ENCODE measurements at regions of chr20 and their contacts with region 1.

Region 1: DNA sequence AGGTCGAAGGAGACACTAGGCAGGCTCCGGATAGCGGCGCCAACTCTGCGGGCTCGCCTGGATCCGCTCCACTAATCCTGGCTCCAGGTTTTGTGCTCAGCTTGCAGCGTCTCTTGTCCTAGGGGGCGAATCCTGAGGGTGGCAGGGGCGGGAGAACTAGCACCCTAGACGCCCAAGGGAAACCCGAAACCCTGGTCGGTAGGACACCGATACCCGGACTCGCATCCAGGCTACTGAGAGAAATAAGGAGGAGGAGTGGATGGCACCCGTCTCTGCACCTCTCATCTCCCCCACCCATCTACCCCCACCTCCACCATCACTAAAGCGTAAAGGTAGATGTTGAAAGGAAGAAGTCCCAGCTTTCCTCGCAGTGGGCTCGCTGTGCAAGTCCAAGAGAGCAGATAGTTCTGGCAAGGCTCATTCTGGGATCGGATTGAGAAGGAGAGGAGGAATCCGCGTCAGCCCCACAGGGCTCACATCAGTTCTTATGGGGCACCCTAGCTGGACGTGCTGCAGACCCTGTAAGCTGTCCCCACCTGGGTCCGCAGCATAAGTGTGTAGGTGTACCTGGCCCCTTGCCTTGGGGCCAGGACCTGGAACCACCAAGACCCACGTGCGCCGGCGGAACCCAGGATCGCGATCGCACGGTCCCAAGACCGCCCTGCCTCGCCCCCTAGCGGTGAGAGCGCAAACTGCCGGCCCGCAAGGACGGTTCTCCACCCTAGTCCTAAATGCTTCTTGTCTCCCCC is 6.9 kb downstream of the SLC32A1 start:
- DNase-seq: peak; percentile 60 to 86 (median 76)
- ATAC-seq: peak; percentile 75
- H3K4me3 ChIP-seq: peak overlapping the region; percentile 46 to 65
- H3K4me3 Mint-ChIP-seq: peak overlapping the region; percentile 73
- H3K27ac ChIP-seq: no peak overlapping the region
- H3K27ac Mint-ChIP-seq: no peak overlapping the region
- H3K4me1 ChIP-seq: peaks cover 34% of the 10 kb centered on the region
- H3K4me1 Mint-ChIP-seq: peaks cover 48% of the 10 kb centered on the region
- H3K27me3 ChIP-seq: peaks cover 60 to 79% of the 10 kb centered on the region in 2 experiments
- H3K27me3 Mint-ChIP-seq: peaks cover 90% of the 10 kb centered on the region
- CTCF ChIP-seq: peak; percentile 97

Region 2: GRCh38 chr20:38221119-38221589 is 510.0 kb before region 1 on chr20:
- CTCF ChIA-PET with region 1: no interaction called
- POLR2A ChIA-PET with region 1: no interaction called
- intact Hi-C with region 1: no loop called
- DNase-seq: peak; percentile 44 to 79 (median 66)
- ATAC-seq: peak; percentile 58
- H3K4me3 ChIP-seq: no peak overlapping the region
- H3K4me3 Mint-ChIP-seq: no peak overlapping the region
- H3K27ac ChIP-seq: no peak overlapping the region
- H3K27ac Mint-ChIP-seq: no peak overlapping the region
- H3K4me1 ChIP-seq: no peaks in the 10 kb centered on the region
- H3K4me1 Mint-ChIP-seq: peaks cover 2% of the 10 kb centered on the region
- H3K27me3 ChIP-seq: no peaks in the 10 kb centered on the region
- H3K27me3 Mint-ChIP-seq: peaks cover 3% of the 10 kb centered on the region
- CTCF ChIP-seq: peak; percentile 76

Region 3: DNA sequence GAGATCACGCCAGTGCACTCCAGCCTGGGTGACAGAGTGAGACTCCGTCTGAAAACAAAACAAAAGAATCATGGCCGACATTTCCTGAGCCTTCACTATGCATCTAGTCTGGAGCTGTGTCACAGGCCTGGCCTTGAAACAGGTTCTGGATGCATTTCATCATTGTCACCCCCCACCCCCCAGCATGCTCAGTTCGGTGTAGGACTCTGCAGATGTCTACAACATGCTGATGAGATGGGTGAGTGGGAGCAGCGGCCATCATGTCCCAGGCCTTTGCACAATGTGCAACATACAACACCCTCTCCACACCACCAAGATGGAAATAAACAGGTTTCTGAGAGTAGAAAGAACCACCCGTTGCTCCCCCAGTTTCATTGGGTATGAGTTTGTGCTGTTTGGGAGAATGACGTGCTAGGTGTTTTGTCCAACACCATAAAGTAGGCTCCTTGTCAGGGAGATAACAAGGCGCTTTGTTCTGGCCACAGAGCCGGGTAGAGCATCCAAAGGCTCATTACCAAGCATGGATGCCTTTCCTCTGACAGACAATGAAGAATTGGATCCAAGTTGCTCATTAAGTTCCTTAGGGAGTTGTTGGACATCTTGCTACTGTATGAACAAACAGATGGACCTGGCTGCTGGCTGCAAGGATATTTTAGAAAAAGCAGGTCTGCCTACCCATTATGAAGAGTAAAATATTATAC is 318.1 kb before region 1 on chr20:
- CTCF ChIA-PET with region 1: no interaction called
- POLR2A ChIA-PET with region 1: no interaction called
- intact Hi-C with region 1: no loop called
- DNase-seq: no peak
- ATAC-seq: no peak
- H3K4me3 ChIP-seq: no peak overlapping the region
- H3K4me3 Mint-ChIP-seq: no peak overlapping the region
- H3K27ac ChIP-seq: no peak overlapping the region
- H3K27ac Mint-ChIP-seq: no peak overlapping the region
- H3K4me1 ChIP-seq: no peaks in the 10 kb centered on the region
- H3K4me1 Mint-ChIP-seq: no peaks in the 10 kb centered on the region
- H3K27me3 ChIP-seq: no peaks in the 10 kb centered on the region
- H3K27me3 Mint-ChIP-seq: no peaks in the 10 kb centered on the region
- CTCF ChIP-seq: no peak

Region 4: DNA sequence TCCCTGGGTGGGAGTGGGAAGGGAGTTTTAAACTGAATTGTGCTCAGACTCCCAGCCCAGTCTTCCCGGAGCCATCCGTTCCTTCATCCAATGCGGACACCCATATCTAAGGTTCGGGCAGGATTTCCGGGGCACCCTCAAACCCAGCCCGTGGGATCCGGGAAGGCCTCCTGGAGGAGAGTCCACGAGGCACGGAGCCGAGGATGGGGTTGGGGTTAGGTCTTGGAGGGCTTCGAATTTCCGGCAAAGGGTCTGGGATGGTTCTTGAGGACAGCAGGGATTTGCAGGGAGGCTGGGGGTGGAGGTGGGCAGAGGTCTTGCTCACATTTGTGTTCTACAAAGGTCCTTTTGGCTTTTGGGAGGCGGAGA is 56.4 kb before region 1 on chr20:
- CTCF ChIA-PET with region 1: interaction called, 3 read pairs
- POLR2A ChIA-PET with region 1: no interaction called
- intact Hi-C with region 1: loop called in 1 of 2 experiments (anchors 5 kb)
- DNase-seq: no peak
- ATAC-seq: no peak
- H3K4me3 ChIP-seq: peak overlapping the region in 1 of 2 experiments; percentile 22
- H3K4me3 Mint-ChIP-seq: peak overlapping the region; percentile 74
- H3K27ac ChIP-seq: no peak overlapping the region
- H3K27ac Mint-ChIP-seq: no peak overlapping the region
- H3K4me1 ChIP-seq: peaks cover 14% of the 10 kb centered on the region
- H3K4me1 Mint-ChIP-seq: peaks cover 10% of the 10 kb centered on the region
- H3K27me3 ChIP-seq: peaks cover 2 to 7% of the 10 kb centered on the region in 2 experiments
- H3K27me3 Mint-ChIP-seq: peaks cover 25% of the 10 kb centered on the region
- CTCF ChIP-seq: no peak

Region 5: DNA sequence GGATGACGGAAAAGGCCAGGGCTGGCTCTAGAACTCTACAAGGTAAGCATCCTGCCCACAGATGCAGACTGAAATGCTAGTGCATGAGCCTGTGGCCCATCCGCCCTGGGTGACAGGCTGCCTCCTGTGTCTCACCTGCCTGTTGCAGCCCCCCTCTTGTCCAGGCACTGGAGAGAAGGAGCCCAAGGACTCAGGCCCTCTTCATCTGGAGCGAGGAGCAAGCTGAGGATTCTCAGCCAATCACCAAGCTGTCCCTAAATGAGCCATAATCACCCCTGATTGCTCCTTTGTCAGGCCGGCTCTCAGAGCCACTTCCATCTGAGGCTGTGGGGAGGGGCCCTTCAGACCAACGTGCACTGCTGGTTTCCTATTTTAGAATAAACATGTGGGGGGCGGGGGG is 16.9 kb before region 1 on chr20:
- CTCF ChIA-PET with region 1: interaction called, 10 read pairs
- POLR2A ChIA-PET with region 1: no interaction called
- intact Hi-C with region 1: no loop called
- DNase-seq: no peak
- ATAC-seq: no peak
- H3K4me3 ChIP-seq: no peak overlapping the region
- H3K4me3 Mint-ChIP-seq: no peak overlapping the region
- H3K27ac ChIP-seq: no peak overlapping the region
- H3K27ac Mint-ChIP-seq: no peak overlapping the region
- H3K4me1 ChIP-seq: no peaks in the 10 kb centered on the region
- H3K4me1 Mint-ChIP-seq: no peaks in the 10 kb centered on the region
- H3K27me3 ChIP-seq: peaks cover 0 to 6% of the 10 kb centered on the region in 2 experiments
- H3K27me3 Mint-ChIP-seq: peaks cover 54% of the 10 kb centered on the region
- CTCF ChIP-seq: no peak